A673 (cell line): ENCODE measurements at regions of chr11 and their contacts with region 1.

Region 1: GRCh38 chr11:45576461-45577215 is 88.8 kb downstream of the CHST1 start:
- DNase-seq: no peak
- H3K4me3 ChIP-seq: no peak overlapping the region
- H3K27ac ChIP-seq: no peak overlapping the region
- H3K4me1 ChIP-seq: no peaks in the 10 kb centered on the region
- H3K27me3 ChIP-seq: no peaks in the 10 kb centered on the region
- CTCF ChIP-seq: no peak

Region 2: GRCh38 chr11:45556851-45557707 is 19.6 kb before region 1 on chr11:
- CTCF ChIA-PET with region 1: no interaction called
- POLR2A ChIA-PET with region 1: no interaction called
- intact Hi-C with region 1: loop called (anchors 2 kb)
- DNase-seq: peak; percentile 41
- H3K4me3 ChIP-seq: no peak overlapping the region
- H3K27ac ChIP-seq: no peak overlapping the region
- H3K4me1 ChIP-seq: no peaks in the 10 kb centered on the region
- H3K27me3 ChIP-seq: no peaks in the 10 kb centered on the region
- CTCF ChIP-seq: no peak